ENCODE measurements at regions of chr9 and their contacts with region 1.

Region 1: GRCh38 chr9:2620919-2621679 is 488 bp upstream of the VLDLR start:
- DNase-seq: peak; percentile 92
- H3K4me3 ChIP-seq: peak overlapping the region; percentile 46 to 84 (median 68)
- H3K27ac ChIP-seq: peak overlapping the region; percentile 67 to 86 (median 81)
- H3K4me1 ChIP-seq: peaks cover 0 to 26% (median 19%) of the 10 kb centered on the region in 4 donors
- H3K27me3 ChIP-seq: no peaks in the 10 kb centered on the region
- CTCF ChIP-seq: peak in 1 of 4 experiments; percentile 11
- EP300 ChIP-seq: no peak
- POLR2A ChIP-seq: no peak

Region 2: GRCh38 chr9:2132484-2133082 is 488.5 kb before region 1 on chr9:
- intact Hi-C with region 1: loop called (anchors 5 kb)
- DNase-seq: no peak
- H3K4me3 ChIP-seq: no peak overlapping the region
- H3K27ac ChIP-seq: no peak overlapping the region
- H3K4me1 ChIP-seq: peaks cover 0 to 59% (median 30%) of the 10 kb centered on the region in 4 donors
- H3K27me3 ChIP-seq: no peaks in the 10 kb centered on the region
- CTCF ChIP-seq: peak in 3 of 4 experiments; percentile 53 to 83 (median 68)
- EP300 ChIP-seq: no peak
- POLR2A ChIP-seq: no peak

Region 3: GRCh38 chr9:2241836-2242741 is 379.0 kb before region 1 on chr9:
- intact Hi-C with region 1: loop called (anchors 10 kb)
- DNase-seq: peak; percentile 90
- H3K4me3 ChIP-seq: peak overlapping the region; percentile 16 to 53 (median 47)
- H3K27ac ChIP-seq: peak overlapping the region; percentile 62 to 76 (median 64)
- H3K4me1 ChIP-seq: peaks cover 2 to 22% (median 12%) of the 10 kb centered on the region in 4 donors
- H3K27me3 ChIP-seq: no peaks in the 10 kb centered on the region
- CTCF ChIP-seq: no peak
- EP300 ChIP-seq: no peak
- POLR2A ChIP-seq: no peak

Region 4: GRCh38 chr9:2494562-2494961 is 126.5 kb before region 1 on chr9:
- intact Hi-C with region 1: loop called (anchors 5 kb)
- DNase-seq: no peak
- H3K4me3 ChIP-seq: no peak overlapping the region
- H3K27ac ChIP-seq: peak overlapping the region in 2 of 4 donors; percentile 35 to 56
- H3K4me1 ChIP-seq: peaks cover 0 to 36% (median 22%) of the 10 kb centered on the region in 4 donors
- H3K27me3 ChIP-seq: no peaks in the 10 kb centered on the region
- CTCF ChIP-seq: no peak
- EP300 ChIP-seq: no peak
- POLR2A ChIP-seq: no peak

Region 5: DNA sequence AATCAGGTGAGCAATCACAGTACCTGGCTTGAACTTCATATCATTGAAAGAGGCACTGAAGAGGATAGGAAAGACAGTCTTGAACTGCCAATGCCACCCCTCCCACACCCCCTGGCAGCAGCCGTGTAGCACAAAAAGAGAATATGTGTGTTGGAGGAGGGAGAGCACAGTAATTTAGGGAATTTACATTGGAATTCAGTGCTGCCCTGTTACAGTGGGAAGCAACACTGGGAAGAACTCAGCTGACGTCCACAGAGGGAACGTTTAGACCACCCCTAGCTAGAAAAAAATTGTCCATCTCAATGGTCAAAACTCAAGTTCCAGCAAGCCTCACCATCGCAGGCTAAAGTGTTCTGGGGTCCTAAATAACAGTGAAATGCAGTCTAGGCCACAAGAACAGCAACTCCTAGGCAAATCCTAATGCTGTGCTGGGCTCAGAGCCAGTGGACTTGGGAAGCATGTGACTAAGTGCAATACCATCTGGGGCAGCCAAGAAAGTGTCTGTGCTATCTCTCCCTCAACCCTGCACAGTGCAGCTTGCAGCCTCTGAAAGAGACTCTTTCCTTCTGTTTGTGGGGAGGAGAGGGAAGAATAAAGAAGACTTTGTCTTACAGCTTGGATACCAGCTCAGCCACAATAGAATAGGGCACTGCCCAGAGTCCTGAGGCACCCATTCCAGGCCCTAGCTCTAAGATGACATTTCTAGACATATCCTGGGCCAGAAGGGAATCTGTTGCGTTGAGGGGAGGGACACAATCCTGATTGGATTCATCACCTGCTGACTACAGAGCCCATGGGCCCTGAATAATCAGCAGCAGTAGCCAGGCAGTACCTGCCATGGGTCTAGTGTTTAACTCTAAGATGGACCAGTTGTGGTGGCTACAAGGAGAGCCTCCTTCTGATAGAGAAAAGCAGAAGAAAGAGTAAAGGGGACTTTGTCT is 61.6 kb before region 1 on chr9:
- intact Hi-C with region 1: loop called (anchors 5 kb)
- DNase-seq: peak; percentile 93
- H3K4me3 ChIP-seq: no peak overlapping the region
- H3K27ac ChIP-seq: peak overlapping the region; percentile 36 to 78 (median 70)
- H3K4me1 ChIP-seq: peaks cover 0 to 21% (median 19%) of the 10 kb centered on the region in 4 donors
- H3K27me3 ChIP-seq: no peaks in the 10 kb centered on the region
- CTCF ChIP-seq: no peak
- EP300 ChIP-seq: no peak
- POLR2A ChIP-seq: no peak

Region 6: DNA sequence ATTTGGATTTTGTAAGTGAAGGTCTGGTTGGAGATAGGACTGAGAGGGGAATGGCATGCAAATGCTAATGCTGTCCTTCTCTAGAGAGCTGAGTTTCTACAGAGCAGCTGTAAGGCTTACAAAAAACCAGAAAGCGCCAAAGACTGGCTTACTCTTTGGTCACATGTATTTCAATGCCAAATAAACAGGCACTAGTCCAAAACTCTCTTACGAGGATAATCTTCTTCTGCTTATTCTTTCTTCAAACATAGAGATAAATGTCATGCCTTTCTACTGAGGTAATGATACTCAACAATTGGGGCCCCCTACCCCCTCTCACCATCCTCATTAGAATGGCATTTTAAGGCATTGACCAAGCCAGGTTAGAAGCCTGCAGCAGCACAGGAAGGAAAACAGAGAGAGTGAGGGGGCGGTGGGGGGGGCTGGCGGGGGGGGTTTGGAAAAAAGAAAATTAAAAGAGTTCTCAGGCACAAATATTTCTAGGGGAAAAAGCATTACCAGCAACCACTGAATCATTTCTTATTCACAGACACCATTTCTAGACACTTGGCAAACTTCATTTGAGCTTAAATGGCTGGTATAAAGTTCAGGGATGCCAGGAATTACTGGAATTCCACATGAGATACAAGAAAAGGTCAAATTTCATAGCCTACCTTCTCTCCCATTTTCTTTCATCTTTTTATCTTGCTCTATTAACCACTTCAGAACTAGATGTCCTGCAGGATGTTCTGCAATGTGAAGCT is 188.8 kb after region 1 on chr9:
- intact Hi-C with region 1: loop called (anchors 10 kb)
- DNase-seq: no peak
- H3K4me3 ChIP-seq: no peak overlapping the region
- H3K27ac ChIP-seq: peak overlapping the region; percentile 59 to 81 (median 66)
- H3K4me1 ChIP-seq: peaks cover 0 to 46% (median 31%) of the 10 kb centered on the region in 4 donors
- H3K27me3 ChIP-seq: no peaks in the 10 kb centered on the region
- CTCF ChIP-seq: no peak
- EP300 ChIP-seq: peak in 1 of 4 donors; percentile 65
- POLR2A ChIP-seq: no peak

Region 7: GRCh38 chr9:2849941-2850340 is 228.8 kb after region 1 on chr9:
- intact Hi-C with region 1: loop called (anchors 10 kb)
- DNase-seq: no peak
- H3K4me3 ChIP-seq: no peak overlapping the region
- H3K27ac ChIP-seq: no peak overlapping the region
- H3K4me1 ChIP-seq: peaks cover 0 to 11% (median 8%) of the 10 kb centered on the region in 4 donors
- H3K27me3 ChIP-seq: no peaks in the 10 kb centered on the region
- CTCF ChIP-seq: no peak
- EP300 ChIP-seq: no peak
- POLR2A ChIP-seq: no peak

Measured in sigmoid colon (tissue), 7 donors.